Calu3 (cell line): ENCODE measurements at regions of chr3 and their contacts with region 1.

Region 1: GRCh38 chr3:184353546-184353941 is 7.9 kb downstream of the CLCN2 start:
- DNase-seq: no peak
- H3K4me3 Mint-ChIP-seq: no peak overlapping the region
- H3K27ac Mint-ChIP-seq: no peak overlapping the region
- H3K4me1 Mint-ChIP-seq: peaks cover 15% of the 10 kb centered on the region
- H3K27me3 Mint-ChIP-seq: no peaks in the 10 kb centered on the region
- CTCF ChIP-seq: no peak

Region 2: DNA sequence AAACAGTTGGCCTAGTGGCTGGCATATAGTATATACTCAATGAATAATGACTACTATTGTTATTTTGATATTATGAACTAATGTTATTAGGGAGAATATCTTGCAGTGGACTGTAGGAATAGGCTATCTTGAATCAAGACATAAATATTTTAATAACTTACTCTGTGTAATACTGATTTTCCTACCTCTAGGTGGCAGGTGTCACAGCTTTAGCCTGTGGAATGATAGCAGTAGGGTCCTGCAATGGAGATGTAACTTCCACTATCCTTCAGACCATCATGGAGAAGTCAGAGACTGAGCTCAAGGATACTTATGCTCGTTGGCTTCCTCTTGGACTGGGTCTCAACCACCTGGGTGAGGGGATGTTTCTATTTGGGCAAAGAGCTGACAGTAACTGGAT is 48.0 kb before region 1 on chr3:
- CTCF ChIA-PET with region 1: interaction called, 11 read pairs
- intact Hi-C with region 1: no loop called
- DNase-seq: no peak
- H3K4me3 Mint-ChIP-seq: no peak overlapping the region
- H3K27ac Mint-ChIP-seq: no peak overlapping the region
- H3K4me1 Mint-ChIP-seq: peaks cover 6% of the 10 kb centered on the region
- H3K27me3 Mint-ChIP-seq: no peaks in the 10 kb centered on the region
- CTCF ChIP-seq: peak; percentile 38